Activated T-helper 1 cell treated with anti-CD3 and anti-CD28 coated beads, Interleukin-12 subunit alpha, Interleukin-12 subunit beta, Interleukin-2, Interleukin-4 antibody, amounts not matched to agents 30 ng/mL and 10 ng/mL and 1 ng/mL, durations not matched to agents 14 hours and 24 hours and 36 hours (primary cell): ENCODE measurements at regions of chr3 and their contacts with region 1.

Region 1: GRCh38 chr3:5136211-5136918 is 14.3 kb downstream of the ARL8B start:
- DNase-seq: peak; percentile 7
- H3K4me3 Mint-ChIP-seq: no peak overlapping the region
- H3K27ac Mint-ChIP-seq: peak overlapping the region; percentile 4
- H3K4me1 Mint-ChIP-seq: peaks cover 39% of the 10 kb centered on the region
- H3K27me3 Mint-ChIP-seq: no peaks in the 10 kb centered on the region

Region 2: GRCh38 chr3:4956738-4957137 is 179.6 kb before region 1 on chr3:
- intact Hi-C with region 1: no loop called
- DNase-seq: no peak
- H3K4me3 Mint-ChIP-seq: no peak overlapping the region
- H3K27ac Mint-ChIP-seq: no peak overlapping the region
- H3K4me1 Mint-ChIP-seq: no peaks in the 10 kb centered on the region
- H3K27me3 Mint-ChIP-seq: peaks cover 2% of the 10 kb centered on the region

Region 3: DNA sequence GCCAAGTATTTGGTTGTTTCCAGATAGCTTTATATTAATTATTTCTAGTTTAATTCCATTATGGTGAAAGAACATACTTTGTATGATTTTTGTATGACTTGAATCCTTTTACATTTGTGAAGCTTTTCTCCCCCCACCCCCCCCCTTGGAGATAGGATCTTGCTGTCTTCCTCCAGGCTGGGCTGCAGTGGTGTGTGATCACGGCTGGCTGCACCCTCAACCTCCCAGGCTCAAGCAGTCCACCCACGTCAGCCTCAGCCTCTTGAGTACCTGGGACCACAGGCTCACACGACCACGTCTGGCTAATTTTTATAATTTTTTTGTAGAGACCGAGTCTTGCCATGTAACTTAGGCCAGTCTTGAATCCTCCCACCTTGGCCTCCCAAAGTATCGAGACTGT is 15.2 kb after region 1 on chr3:
- intact Hi-C with region 1: no loop called
- DNase-seq: no peak
- H3K4me3 Mint-ChIP-seq: no peak overlapping the region
- H3K27ac Mint-ChIP-seq: no peak overlapping the region
- H3K4me1 Mint-ChIP-seq: peaks cover 11% of the 10 kb centered on the region
- H3K27me3 Mint-ChIP-seq: no peaks in the 10 kb centered on the region

Region 4: GRCh38 chr3:5232570-5232969 is 96.2 kb after region 1 on chr3:
- intact Hi-C with region 1: loop called (anchors 2 kb)
- DNase-seq: no peak
- H3K4me3 Mint-ChIP-seq: no peak overlapping the region
- H3K27ac Mint-ChIP-seq: no peak overlapping the region
- H3K4me1 Mint-ChIP-seq: no peaks in the 10 kb centered on the region
- H3K27me3 Mint-ChIP-seq: peaks cover 2% of the 10 kb centered on the region

Region 5: DNA sequence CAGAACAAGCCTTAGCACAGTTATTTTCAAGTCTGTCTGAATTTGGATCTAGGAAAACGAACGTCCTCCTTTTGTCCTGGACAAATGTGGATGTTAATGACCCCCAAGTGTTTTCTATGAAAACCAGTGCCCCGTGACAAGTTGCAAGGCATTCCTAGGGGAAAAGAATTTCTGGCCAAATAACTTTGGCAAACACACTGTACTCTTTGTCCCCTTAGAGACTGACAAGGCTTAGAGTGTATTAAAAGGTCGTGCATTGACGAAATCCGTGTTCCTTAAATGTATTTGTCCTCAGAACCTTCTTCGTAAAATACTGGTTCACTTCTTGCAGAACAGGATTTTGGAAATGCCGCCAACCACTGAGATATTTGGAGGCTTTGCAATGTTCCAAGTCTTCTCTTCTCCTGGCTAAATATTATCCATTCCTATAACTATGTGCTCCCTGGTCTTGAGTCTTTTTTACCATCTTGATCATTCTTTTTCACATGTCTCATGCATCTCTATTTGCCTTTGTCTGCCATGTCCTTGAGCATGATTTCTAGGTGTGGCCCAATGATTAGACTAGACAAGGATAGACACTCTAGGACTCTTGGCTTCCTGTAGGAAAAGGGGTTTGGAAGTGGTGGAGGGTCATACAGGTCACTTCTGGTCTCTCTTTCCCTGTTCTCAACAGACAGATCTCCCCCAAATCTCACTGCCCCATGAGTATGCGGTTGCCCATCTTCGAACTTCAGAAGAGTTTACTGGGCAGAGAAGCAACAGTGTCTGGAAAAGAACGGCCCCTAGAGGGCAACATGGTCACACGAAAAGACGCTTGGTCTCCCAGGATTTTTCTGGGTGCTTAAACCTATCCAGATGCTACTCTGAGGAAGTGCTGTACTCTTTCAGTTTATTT is 168.7 kb after region 1 on chr3:
- intact Hi-C with region 1: loop called (anchors 2 kb)
- DNase-seq: no peak
- H3K4me3 Mint-ChIP-seq: no peak overlapping the region
- H3K27ac Mint-ChIP-seq: no peak overlapping the region
- H3K4me1 Mint-ChIP-seq: no peaks in the 10 kb centered on the region
- H3K27me3 Mint-ChIP-seq: no peaks in the 10 kb centered on the region

Region 6: DNA sequence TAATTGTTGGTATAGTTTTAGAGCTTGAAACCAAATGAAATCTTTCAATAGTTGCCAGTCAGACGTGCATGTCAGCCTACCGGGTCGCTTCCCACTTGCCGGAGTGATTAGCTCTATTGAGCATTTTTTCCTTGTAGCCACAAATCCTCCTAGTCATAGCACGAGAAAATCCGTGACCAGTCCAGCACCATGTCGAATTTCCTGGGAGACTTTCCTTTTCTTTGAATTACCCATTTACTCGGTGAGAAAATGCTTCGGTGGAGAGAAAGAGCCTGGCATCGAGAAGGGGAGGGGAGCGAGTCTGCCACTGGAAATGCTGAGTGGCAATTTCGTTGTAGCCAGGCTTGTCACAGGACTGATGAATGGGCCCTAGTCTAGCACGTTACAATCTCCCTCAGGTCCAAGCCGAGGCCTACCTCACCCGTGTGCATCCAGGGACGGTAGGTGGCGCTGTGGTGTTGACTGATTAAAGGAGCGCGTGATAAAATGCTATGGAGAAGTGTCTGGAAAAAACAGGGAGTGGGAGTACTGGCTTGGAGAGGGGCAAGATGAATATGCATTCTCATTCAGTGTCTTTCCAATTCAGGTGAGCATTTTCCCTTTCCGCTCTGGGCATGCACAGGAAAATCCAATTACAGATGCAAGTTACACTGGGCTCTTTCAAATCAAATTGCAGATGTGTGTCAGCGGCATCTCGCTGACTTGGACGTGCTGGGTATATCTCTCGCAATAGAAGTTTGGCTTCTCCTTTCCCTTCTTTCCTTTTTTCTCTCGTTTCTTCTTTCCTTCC is 289.9 kb after region 1 on chr3:
- intact Hi-C with region 1: loop called (anchors 2 kb)
- DNase-seq: peak; percentile 18
- H3K4me3 Mint-ChIP-seq: no peak overlapping the region
- H3K27ac Mint-ChIP-seq: no peak overlapping the region
- H3K4me1 Mint-ChIP-seq: no peaks in the 10 kb centered on the region
- H3K27me3 Mint-ChIP-seq: peaks cover 1% of the 10 kb centered on the region